Activated naive CD4-positive, alpha-beta T cell treated with anti-CD3 and anti-CD28 coated beads for 36 hours (primary cell): ENCODE measurements at regions of chrX and their contacts with region 1.

Region 1: GRCh38 chrX:130110379-130111219 is at the start of gene ELF4:
- DNase-seq: peak; percentile 66
- H3K4me3 Mint-ChIP-seq: peak within 1 kb of the TSS; percentile 87
- H3K27ac Mint-ChIP-seq: peak within 1 kb of the TSS; percentile 87
- H3K4me1 Mint-ChIP-seq: peaks cover 36% of the 10 kb centered on the region
- H3K27me3 Mint-ChIP-seq: no peaks in the 10 kb centered on the region
- total RNA-seq, gene ELF4: 15.8 to 16.5 TPM

Region 2: DNA sequence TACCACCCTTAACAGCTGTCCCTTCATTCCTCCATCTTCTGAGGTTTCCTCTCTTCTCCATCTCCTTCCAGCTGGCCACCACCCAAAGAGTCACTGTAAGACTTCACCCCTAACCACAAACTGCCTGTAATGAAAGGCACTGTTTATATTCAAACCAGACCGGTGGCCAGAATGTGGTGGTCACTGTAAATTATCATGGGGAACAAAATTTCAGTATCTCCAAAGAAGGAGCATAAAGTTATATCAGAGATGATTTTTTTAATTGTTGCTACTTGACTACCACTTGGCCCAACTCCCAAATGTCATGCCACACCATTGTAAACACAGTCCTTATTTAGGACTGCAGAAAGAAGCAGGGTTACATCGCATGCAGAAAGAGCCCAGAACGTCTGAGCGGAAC is 632.1 kb before region 1 on chrX:
- CTCF ChIA-PET with region 1: no interaction called
- intact Hi-C with region 1: no loop called
- DNase-seq: no peak
- H3K4me3 Mint-ChIP-seq: no peak overlapping the region
- H3K27ac Mint-ChIP-seq: no peak overlapping the region
- H3K4me1 Mint-ChIP-seq: no peaks in the 10 kb centered on the region
- H3K27me3 Mint-ChIP-seq: no peaks in the 10 kb centered on the region

Region 3: GRCh38 chrX:130091958-130092522 is 18.6 kb before region 1 on chrX:
- CTCF ChIA-PET with region 1: interaction called, 4 read pairs
- intact Hi-C with region 1: loop called (anchors 1 kb)
- DNase-seq: peak; percentile 94
- H3K4me3 Mint-ChIP-seq: peak overlapping the region; percentile 80
- H3K27ac Mint-ChIP-seq: peak overlapping the region; percentile 96
- H3K4me1 Mint-ChIP-seq: peaks cover 58% of the 10 kb centered on the region
- H3K27me3 Mint-ChIP-seq: no peaks in the 10 kb centered on the region

Region 4: GRCh38 chrX:130097507-130098209 is 12.9 kb before region 1 on chrX:
- CTCF ChIA-PET with region 1: interaction called, 4 read pairs
- intact Hi-C with region 1: loop called (anchors 1 kb)
- DNase-seq: peak; percentile 11
- H3K4me3 Mint-ChIP-seq: no peak overlapping the region
- H3K27ac Mint-ChIP-seq: peak overlapping the region; percentile 54
- H3K4me1 Mint-ChIP-seq: peaks cover 66% of the 10 kb centered on the region
- H3K27me3 Mint-ChIP-seq: no peaks in the 10 kb centered on the region

Region 5: GRCh38 chrX:130120746-130121504 is 10.3 kb after region 1 on chrX:
- CTCF ChIA-PET with region 1: interaction called, 9 read pairs
- intact Hi-C with region 1: loop called (anchors 1 kb)
- DNase-seq: peak; percentile 77
- H3K4me3 Mint-ChIP-seq: peak overlapping the region; percentile 61
- H3K27ac Mint-ChIP-seq: no peak overlapping the region
- H3K4me1 Mint-ChIP-seq: peaks cover 15% of the 10 kb centered on the region
- H3K27me3 Mint-ChIP-seq: no peaks in the 10 kb centered on the region

Region 6: GRCh38 chrX:130173190-130173895 is 62.7 kb after region 1 on chrX:
- CTCF ChIA-PET with region 1: no interaction called
- intact Hi-C with region 1: loop called (anchors 2 kb)
- DNase-seq: peak; percentile 68
- H3K4me3 Mint-ChIP-seq: peak overlapping the region; percentile 87
- H3K27ac Mint-ChIP-seq: peak overlapping the region; percentile 94
- H3K4me1 Mint-ChIP-seq: peaks cover 45% of the 10 kb centered on the region
- H3K27me3 Mint-ChIP-seq: no peaks in the 10 kb centered on the region

Region 7: DNA sequence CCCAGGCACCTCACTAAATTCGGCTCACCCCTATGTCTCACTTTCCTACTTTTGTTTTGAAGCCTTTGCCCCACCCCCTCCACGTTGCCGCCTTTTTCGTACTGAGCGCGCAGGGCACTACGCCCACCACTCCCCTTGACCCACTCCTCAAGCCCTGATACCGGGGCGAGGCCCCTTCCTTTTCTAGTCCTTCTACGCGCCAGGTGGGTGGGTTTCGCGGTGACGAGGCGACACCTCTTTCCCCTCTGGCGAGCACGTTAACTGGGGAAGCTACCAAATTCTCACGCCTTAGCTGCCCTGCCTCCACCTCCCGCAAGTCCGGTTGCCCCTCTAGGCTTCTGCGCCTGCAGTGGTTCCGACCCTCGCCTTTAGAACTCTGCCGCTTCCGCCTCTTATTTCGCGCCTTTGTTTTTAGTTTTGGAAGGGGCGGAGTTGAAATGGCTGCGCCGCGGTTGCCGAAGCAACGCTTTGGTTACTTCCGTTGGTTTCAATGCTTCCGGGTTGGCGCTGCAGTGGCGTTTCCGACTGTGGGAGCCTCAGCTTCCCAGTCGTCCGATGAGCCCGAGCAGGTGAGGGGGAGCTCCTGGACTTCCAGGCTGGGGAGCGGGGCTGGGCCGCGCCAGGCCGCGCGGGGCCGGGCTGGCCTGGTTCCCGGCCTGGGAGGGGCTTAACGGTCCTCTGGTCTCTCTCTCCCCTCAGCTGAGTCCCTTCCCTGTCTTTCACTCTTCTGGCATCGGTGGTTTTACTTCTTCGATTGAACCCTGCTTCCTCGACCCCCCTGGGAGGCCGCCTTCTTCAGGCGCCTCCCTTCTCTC is 229.0 kb after region 1 on chrX and contains the start of gene SLC25A14:
- CTCF ChIA-PET with region 1: no interaction called
- intact Hi-C with region 1: loop called (anchors 1 kb)
- DNase-seq: peak; percentile 82
- H3K4me3 Mint-ChIP-seq: peak within 1 kb of the TSS; percentile 86
- H3K27ac Mint-ChIP-seq: peak within 1 kb of the TSS; percentile 89
- H3K4me1 Mint-ChIP-seq: peaks cover 13% of the 10 kb centered on the region
- H3K27me3 Mint-ChIP-seq: no peaks in the 10 kb centered on the region
- total RNA-seq, gene SLC25A14: 7.4 to 9.0 TPM